ENCODE measurements at regions of chr22 and their contacts with region 1.

Region 1: GRCh38 chr22:37608477-37609239 is at the start of gene GGA1:
- DNase-seq: peak; percentile 98
- ATAC-seq: peak; percentile 81
- H3K4me3 Mint-ChIP-seq: peak within 1 kb of the TSS; percentile 100
- H3K27ac Mint-ChIP-seq: peak within 1 kb of the TSS; percentile 98
- H3K4me1 Mint-ChIP-seq: peaks cover 72% of the 10 kb centered on the region
- H3K27me3 Mint-ChIP-seq: peaks cover 4% of the 10 kb centered on the region
- total RNA-seq, gene GGA1: 66.3 to 69.5 TPM

Region 2: GRCh38 chr22:37464181-37464580 is 144.5 kb before region 1 on chr22:
- CTCF ChIA-PET with region 1: no interaction called
- POLR2A ChIA-PET with region 1: no interaction called
- DNase-seq: no peak
- ATAC-seq: no peak
- H3K4me3 Mint-ChIP-seq: no peak overlapping the region
- H3K27ac Mint-ChIP-seq: peak overlapping the region; percentile 12
- H3K4me1 Mint-ChIP-seq: peaks cover 16% of the 10 kb centered on the region
- H3K27me3 Mint-ChIP-seq: no peaks in the 10 kb centered on the region

Region 3: GRCh38 chr22:37508431-37508992 is 100.1 kb before region 1 on chr22:
- CTCF ChIA-PET with region 1: no interaction called
- POLR2A ChIA-PET with region 1: no interaction called
- DNase-seq: no peak
- ATAC-seq: no peak
- H3K4me3 Mint-ChIP-seq: no peak overlapping the region
- H3K27ac Mint-ChIP-seq: no peak overlapping the region
- H3K4me1 Mint-ChIP-seq: no peaks in the 10 kb centered on the region
- H3K27me3 Mint-ChIP-seq: no peaks in the 10 kb centered on the region

Region 4: GRCh38 chr22:37538590-37539357 is 69.9 kb before region 1 on chr22:
- CTCF ChIA-PET with region 1: interaction called, 14 read pairs
- POLR2A ChIA-PET with region 1: no interaction called
- DNase-seq: peak; percentile 95
- ATAC-seq: peak; percentile 99
- H3K4me3 Mint-ChIP-seq: peak overlapping the region; percentile 3
- H3K27ac Mint-ChIP-seq: peak overlapping the region; percentile 20
- H3K4me1 Mint-ChIP-seq: peaks cover 52% of the 10 kb centered on the region
- H3K27me3 Mint-ChIP-seq: peaks cover 20% of the 10 kb centered on the region

Region 5: DNA sequence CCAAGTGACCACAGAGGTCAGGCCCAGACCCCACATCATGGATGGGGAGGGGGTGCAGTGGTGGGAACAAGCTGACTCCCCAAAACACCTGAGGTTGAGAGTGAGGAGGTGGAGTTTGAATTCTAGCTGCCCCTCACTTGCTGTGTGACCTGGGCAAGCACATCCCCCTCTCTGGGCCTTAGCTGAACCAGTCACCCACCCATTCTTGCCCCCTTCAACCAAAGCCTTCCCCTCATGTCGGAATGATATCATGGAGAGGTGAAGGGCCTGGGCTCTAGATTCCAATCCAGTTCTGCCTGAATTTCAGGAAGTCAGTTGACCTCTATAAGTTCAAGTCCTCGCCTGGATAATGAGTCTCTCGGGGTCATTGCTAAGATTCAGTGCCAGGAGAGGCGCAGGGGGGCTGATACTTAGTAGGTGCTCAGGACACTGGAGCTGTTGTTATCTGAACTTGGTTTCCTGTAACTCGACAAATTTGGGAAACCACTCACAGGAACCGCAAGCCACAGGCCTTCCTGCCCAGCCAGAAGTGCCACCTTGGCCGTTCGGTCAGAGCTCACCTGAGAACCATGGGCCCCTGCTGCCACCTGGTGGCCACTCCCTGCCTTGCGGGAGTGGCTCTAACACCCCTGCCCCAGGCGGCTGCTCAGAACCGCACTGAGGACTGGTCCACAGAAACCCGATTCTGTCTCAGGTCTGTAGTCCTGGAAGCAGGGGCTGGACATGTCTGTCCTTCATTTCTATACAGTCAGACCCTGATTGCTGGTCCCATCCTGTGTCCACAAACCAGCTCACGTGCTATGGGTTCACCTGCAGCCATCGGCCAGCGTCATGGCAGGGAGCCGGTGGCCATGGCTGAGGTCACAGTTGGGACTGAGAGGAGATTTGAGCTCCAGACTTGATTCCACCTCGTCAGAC is 41.5 kb before region 1 on chr22:
- CTCF ChIA-PET with region 1: interaction called, 30 read pairs
- POLR2A ChIA-PET with region 1: interaction called, 4 read pairs
- DNase-seq: peak; percentile 97
- ATAC-seq: peak; percentile 91
- H3K4me3 Mint-ChIP-seq: peak overlapping the region; percentile 63
- H3K27ac Mint-ChIP-seq: peak overlapping the region; percentile 79
- H3K4me1 Mint-ChIP-seq: peaks cover 28% of the 10 kb centered on the region
- H3K27me3 Mint-ChIP-seq: peaks cover 36% of the 10 kb centered on the region

Region 6: GRCh38 chr22:37623075-37624016 is 14.7 kb after region 1 on chr22:
- CTCF ChIA-PET with region 1: interaction called, 37 read pairs
- POLR2A ChIA-PET with region 1: interaction called, 8 read pairs
- DNase-seq: peak; percentile 85
- ATAC-seq: peak; percentile 66
- H3K4me3 Mint-ChIP-seq: no peak overlapping the region
- H3K27ac Mint-ChIP-seq: peak overlapping the region; percentile 89
- H3K4me1 Mint-ChIP-seq: peaks cover 52% of the 10 kb centered on the region
- H3K27me3 Mint-ChIP-seq: no peaks in the 10 kb centered on the region

Region 7: GRCh38 chr22:37643225-37643847 is 34.7 kb after region 1 on chr22:
- CTCF ChIA-PET with region 1: interaction called, 114 read pairs
- POLR2A ChIA-PET with region 1: interaction called, 6 read pairs
- DNase-seq: peak; percentile 91
- ATAC-seq: peak; percentile 61
- H3K4me3 Mint-ChIP-seq: peak overlapping the region; percentile 63
- H3K27ac Mint-ChIP-seq: peak overlapping the region; percentile 72
- H3K4me1 Mint-ChIP-seq: peaks cover 47% of the 10 kb centered on the region
- H3K27me3 Mint-ChIP-seq: no peaks in the 10 kb centered on the region

Region 8: GRCh38 chr22:37676736-37677492 is 68.3 kb after region 1 on chr22:
- CTCF ChIA-PET with region 1: interaction called, 26 read pairs
- POLR2A ChIA-PET with region 1: interaction called, 4 read pairs
- DNase-seq: peak; percentile 95
- ATAC-seq: peak; percentile 69
- H3K4me3 Mint-ChIP-seq: peak overlapping the region; percentile 82
- H3K27ac Mint-ChIP-seq: peak overlapping the region; percentile 99
- H3K4me1 Mint-ChIP-seq: peaks cover 63% of the 10 kb centered on the region
- H3K27me3 Mint-ChIP-seq: no peaks in the 10 kb centered on the region

Measured in activated CD8-positive, alpha-beta T cell treated with anti-CD3 and anti-CD28 coated beads, Interleukin-2, amount 10 ng/mL, durations not matched to agents 7 days and 5 days (primary cell).